Tibial artery (tissue), 4 donors: ENCODE measurements at regions of chr4 and their contacts with region 1.

Region 1: GRCh38 chr4:121535351-121535750 is 154.5 kb upstream of the QRFPR start:
- DNase-seq: no peak
- H3K4me3 ChIP-seq: no peak overlapping the region
- H3K27ac ChIP-seq: no peak overlapping the region
- H3K4me1 ChIP-seq: no peaks in the 10 kb centered on the region
- H3K27me3 ChIP-seq: no peaks in the 10 kb centered on the region
- CTCF ChIP-seq: no peak

Region 2: GRCh38 chr4:121614101-121614500 is 78.8 kb after region 1 on chr4:
- intact Hi-C with region 1: loop called (anchors 2 kb)
- DNase-seq: no peak
- H3K4me3 ChIP-seq: no peak overlapping the region
- H3K27ac ChIP-seq: no peak overlapping the region
- H3K4me1 ChIP-seq: no peaks in the 10 kb centered on the region
- H3K27me3 ChIP-seq: no peaks in the 10 kb centered on the region
- CTCF ChIP-seq: no peak